Activated T-helper 1 cell treated with anti-CD3 and anti-CD28 coated beads, Interleukin-12 subunit alpha, Interleukin-12 subunit beta, Interleukin-2, Interleukin-4 antibody, amounts not matched to agents 30 ng/mL and 10 ng/mL and 1 ng/mL, durations not matched to agents 14 hours and 24 hours and 36 hours (primary cell): ENCODE measurements at regions of chr13 and their contacts with region 1.

Region 1: GRCh38 chr13:77751513-77752456 is 54.3 kb downstream of the SLAIN1 start:
- DNase-seq: peak; percentile 44
- H3K4me3 Mint-ChIP-seq: no peak overlapping the region
- H3K27ac Mint-ChIP-seq: peak overlapping the region; percentile 42
- H3K4me1 Mint-ChIP-seq: peaks cover 18% of the 10 kb centered on the region
- H3K27me3 Mint-ChIP-seq: no peaks in the 10 kb centered on the region

Region 2: DNA sequence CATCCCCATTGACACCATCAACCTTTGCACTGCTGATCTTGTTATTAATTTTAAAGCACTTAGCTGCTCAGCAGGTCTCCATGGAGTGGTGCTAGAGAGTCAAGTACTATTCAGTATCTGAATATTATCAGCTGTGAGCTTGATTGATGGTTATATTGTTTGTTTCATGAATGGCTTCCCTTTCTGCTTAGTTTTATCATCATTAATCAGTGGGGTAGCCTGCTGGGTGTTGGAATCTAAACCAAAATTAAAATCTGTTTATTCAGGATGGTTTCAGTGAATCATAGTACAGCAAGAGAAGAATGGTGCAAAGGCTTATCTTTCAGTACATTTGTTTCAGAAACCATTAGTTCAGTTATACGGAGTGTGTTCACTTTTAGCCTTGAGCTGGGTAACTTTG is 258.8 kb before region 1 on chr13:
- intact Hi-C with region 1: loop called (anchors 5 kb)
- DNase-seq: no peak
- H3K4me3 Mint-ChIP-seq: no peak overlapping the region
- H3K27ac Mint-ChIP-seq: no peak overlapping the region
- H3K4me1 Mint-ChIP-seq: no peaks in the 10 kb centered on the region
- H3K27me3 Mint-ChIP-seq: peaks cover 6% of the 10 kb centered on the region

Region 3: DNA sequence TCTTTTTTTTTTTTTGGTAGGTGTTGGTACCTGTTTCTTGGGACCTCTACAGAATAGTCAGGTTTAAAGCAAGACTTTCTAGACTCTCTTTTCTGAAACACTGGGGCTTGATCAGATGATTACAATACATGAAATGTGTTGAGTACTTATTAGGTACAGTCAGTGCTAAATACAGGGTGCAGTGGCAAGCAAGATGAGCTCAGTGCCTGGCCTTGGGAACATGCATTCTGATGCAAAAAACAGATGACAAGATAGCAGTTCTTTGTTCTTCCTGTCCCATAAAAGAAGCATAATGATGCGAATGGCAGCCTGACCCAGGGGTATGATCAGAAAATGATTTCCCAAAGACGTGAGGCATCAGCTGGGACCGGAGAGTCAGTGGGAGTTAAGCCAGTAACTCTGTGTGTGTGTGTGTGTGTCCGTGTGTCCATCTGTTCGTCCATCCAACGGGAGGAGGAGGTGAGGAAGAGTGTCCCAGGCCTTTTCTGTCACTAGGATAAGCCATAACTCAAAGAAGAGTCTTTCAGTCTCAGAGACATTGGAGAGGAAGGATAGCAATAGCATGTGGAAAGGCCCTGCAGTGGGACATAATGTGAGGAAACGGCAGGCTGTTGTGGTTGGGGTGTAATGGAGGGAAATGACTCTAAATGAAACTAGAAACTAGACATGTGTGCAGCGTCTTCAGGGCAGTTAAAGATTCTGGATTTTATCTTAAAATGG is 22.1 kb before region 1 on chr13:
- intact Hi-C with region 1: loop called (anchors 1 kb)
- DNase-seq: peak; percentile 54
- H3K4me3 Mint-ChIP-seq: peak overlapping the region; percentile 59
- H3K27ac Mint-ChIP-seq: peak overlapping the region; percentile 78
- H3K4me1 Mint-ChIP-seq: peaks cover 50% of the 10 kb centered on the region
- H3K27me3 Mint-ChIP-seq: no peaks in the 10 kb centered on the region

Region 4: DNA sequence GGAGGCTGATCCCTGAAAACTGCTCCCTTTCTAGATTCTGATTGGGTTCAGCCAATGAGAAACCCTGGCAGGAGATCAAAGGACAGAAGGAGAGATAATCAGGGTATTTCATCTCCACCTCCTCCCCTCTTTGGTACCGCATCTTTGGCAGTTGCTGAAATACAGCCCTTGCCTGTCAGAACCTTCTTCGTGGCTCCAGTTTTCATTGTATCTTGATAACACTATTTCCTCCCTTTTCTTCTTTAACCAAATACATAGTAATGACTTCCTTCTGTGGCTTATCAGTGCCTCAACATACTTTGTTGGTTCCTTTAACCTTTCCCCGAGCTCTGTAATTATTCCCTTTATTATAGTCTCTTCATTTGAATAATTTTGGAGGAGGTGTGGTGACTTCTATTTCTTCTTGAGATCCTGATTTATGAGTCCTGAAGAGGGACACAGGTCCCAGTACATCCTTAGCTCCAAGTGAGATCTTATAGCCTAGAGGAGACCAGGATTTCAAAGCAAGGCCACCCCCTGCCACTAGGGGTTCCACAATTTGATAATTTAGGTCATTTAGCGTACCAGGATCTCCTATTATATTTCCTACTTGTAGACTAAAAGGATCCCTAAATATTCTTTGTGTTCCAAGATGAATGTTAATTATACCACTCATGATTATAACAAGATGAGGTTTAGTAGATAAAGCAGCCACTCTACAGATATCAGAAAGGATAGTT is 68.8 kb after region 1 on chr13:
- intact Hi-C with region 1: no loop called
- DNase-seq: no peak
- H3K4me3 Mint-ChIP-seq: no peak overlapping the region
- H3K27ac Mint-ChIP-seq: no peak overlapping the region
- H3K4me1 Mint-ChIP-seq: no peaks in the 10 kb centered on the region
- H3K27me3 Mint-ChIP-seq: peaks cover 10% of the 10 kb centered on the region